ENCODE measurements at regions of chr9 and their contacts with region 1.

Region 1: GRCh38 chr9:6353851-6354686 is 25.9 kb downstream of the TPD52L3 start:
- DNase-seq: peak; percentile 76
- CTCF ChIP-seq: peak; percentile 76

Region 2: GRCh38 chr9:6367128-6367890 is 13.2 kb after region 1 on chr9:
- CTCF ChIA-PET with region 1: interaction called, 19 read pairs
- POLR2A ChIA-PET with region 1: no interaction called
- DNase-seq: no peak
- CTCF ChIP-seq: no peak

Region 3: DNA sequence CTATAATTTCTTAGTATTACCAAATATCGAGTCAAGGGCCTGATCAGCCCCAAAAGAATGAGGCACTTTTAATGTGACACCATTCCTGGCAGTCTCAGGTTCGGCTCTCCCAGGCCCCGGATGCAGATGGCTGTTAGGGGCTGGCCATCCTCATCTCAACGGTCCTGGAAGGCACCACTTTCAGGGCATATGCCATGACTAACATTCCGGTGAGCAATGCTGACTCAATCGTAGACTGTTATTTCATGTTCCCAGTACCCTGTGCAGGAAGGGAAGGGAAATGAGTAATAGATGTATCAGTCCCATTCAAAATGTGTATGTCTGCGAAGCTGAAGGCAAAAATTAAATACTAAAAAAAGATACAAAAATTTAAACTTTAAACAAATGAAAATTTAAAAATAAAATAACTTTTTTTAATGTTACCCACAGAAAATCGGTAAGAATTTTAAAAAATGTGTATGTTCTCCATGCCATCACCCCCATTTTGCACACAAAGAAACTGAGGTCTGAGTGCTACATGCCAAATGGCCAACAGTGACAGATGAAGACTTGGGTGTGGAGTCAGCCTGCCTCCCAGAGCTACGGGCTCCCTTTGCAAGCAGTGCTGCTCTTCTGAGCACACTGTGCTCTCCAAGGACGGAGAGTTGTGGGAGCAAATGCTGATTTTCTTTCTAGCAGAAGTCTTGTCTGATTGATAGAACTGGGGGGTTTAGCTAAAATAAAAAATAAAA is 212.5 kb after region 1 on chr9:
- CTCF ChIA-PET with region 1: interaction called, 42 read pairs
- POLR2A ChIA-PET with region 1: no interaction called
- DNase-seq: peak; percentile 28
- CTCF ChIP-seq: no peak

Measured in GM10248 (cell line).